T-cell (primary cell): ENCODE measurements at regions of chr6 and their contacts with region 1.

Region 1: GRCh38 chr6:80029470-80029869 is 25.0 kb downstream of the TTK start:
- DNase-seq: no peak
- ATAC-seq: no peak
- H3K4me3 ChIP-seq: no peak overlapping the region
- H3K4me3 Mint-ChIP-seq: no peak overlapping the region
- H3K27ac ChIP-seq: no peak overlapping the region
- H3K27ac Mint-ChIP-seq: no peak overlapping the region
- H3K4me1 ChIP-seq: no peaks in the 10 kb centered on the region
- H3K4me1 Mint-ChIP-seq: peaks cover 0 to 5% (median 0%) of the 10 kb centered on the region in 3 donors
- H3K27me3 ChIP-seq: no peaks in the 10 kb centered on the region
- H3K27me3 Mint-ChIP-seq: no peaks in the 10 kb centered on the region

Region 2: DNA sequence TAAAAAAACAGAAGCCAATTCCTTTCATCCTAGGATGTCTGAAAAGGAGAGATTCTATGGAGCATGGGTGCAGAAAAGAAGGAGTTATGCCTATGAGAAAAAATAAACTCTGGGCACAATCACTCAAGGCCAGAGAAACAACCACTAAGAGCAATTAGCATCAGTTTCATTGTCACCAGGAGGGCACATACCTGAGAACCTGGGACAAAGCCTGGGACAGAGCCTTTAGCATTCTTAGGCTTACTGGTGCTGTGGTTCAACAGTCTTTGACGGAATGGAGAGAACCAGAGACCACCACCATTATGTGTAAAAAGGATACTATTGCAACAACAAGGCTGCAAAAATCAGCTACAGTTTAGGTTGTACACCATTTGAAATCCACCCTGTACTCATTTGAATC is 47.6 kb after region 1 on chr6:
- CTCF ChIA-PET with region 1: interaction called in 1 of 2 experiments, 11 read pairs
- POLR2A ChIA-PET with region 1: no interaction called
- DNase-seq: no peak
- ATAC-seq: no peak
- H3K4me3 ChIP-seq: no peak overlapping the region
- H3K4me3 Mint-ChIP-seq: no peak overlapping the region
- H3K27ac ChIP-seq: no peak overlapping the region
- H3K27ac Mint-ChIP-seq: no peak overlapping the region
- H3K4me1 ChIP-seq: no peaks in the 10 kb centered on the region
- H3K4me1 Mint-ChIP-seq: no peaks in the 10 kb centered on the region
- H3K27me3 ChIP-seq: peaks cover 0 to 15% of the 10 kb centered on the region in 2 experiments
- H3K27me3 Mint-ChIP-seq: peaks cover 5 to 13% of the 10 kb centered on the region in 2 donors